ENCODE measurements at regions of chrX and their contacts with region 1.

Region 1: DNA sequence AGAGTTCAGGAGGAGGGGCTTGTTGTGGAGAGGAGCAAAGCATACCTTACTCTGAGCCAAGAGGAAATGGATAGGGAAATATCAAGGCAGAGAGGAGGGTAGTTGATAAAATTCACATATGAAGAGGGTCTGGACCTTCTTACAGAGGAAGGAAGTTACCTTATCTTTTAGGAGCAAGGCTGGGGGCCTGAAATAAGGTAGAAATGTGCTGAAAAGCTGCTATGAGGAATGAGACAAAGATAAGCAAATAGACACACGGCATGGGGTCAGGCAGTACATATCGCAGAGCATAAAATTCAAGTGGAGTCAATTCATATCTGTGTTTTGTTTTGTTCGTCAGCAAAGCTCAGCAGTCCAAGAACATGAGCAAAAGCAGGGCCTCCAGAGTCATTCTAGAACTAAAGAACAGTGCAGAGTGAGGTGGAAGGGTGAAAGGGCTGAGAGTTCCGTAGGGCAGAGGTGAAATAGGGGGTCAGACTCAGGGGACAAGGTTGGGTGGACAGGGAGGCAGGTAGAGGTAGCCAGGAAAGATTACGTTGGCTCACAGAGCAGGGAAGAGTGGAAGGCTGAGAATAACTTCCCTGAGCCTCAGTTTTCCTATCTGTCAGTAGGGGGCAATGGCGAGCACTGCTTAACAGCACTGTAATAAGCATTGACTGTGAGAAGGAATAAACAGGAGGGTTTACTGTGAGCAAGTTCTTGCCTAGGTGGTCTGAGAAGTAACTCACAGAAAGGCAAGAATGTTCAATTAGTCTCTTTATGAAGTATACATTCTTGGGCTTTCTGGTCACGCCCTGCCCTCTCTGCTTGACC is 9.2 kb downstream of the VSIG4 start:
- DNase-seq: peak in 6 of 42 donors; percentile 12 to 62 (median 24)

Region 2: DNA sequence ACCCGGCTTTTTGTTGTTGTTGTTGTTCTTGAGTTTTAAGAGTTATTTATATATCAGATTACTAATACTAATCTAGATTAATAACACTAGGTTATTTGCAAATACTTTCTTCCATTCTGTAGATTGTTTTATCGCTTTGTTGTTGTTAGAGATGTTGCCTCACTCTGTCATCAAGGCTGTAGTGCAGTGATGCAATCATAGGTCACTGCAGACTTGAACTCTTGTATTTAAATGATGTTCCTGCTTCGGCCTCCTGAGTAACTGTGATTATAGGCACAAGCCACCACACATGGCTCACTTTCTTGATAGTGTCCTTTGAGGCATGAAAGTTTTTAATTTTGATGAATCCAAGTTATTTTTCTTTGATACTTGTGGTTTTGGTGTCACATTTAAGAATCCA is 119.8 kb before region 1 on chrX:
- intact Hi-C with region 1: no loop called
- DNase-seq: no peak

Region 3: GRCh38 chrX:66110112-66110511 is 79.4 kb after region 1 on chrX:
- intact Hi-C with region 1: no loop called
- DNase-seq: peak in 1 of 42 donors; percentile 1

Region 4: GRCh38 chrX:66731398-66731797 is 700.7 kb after region 1 on chrX:
- intact Hi-C with region 1: loop called (anchors 10 kb)
- DNase-seq: peak in 1 of 42 donors; percentile 20